ENCODE measurements at regions of chr16 and their contacts with region 1.

Region 1: DNA sequence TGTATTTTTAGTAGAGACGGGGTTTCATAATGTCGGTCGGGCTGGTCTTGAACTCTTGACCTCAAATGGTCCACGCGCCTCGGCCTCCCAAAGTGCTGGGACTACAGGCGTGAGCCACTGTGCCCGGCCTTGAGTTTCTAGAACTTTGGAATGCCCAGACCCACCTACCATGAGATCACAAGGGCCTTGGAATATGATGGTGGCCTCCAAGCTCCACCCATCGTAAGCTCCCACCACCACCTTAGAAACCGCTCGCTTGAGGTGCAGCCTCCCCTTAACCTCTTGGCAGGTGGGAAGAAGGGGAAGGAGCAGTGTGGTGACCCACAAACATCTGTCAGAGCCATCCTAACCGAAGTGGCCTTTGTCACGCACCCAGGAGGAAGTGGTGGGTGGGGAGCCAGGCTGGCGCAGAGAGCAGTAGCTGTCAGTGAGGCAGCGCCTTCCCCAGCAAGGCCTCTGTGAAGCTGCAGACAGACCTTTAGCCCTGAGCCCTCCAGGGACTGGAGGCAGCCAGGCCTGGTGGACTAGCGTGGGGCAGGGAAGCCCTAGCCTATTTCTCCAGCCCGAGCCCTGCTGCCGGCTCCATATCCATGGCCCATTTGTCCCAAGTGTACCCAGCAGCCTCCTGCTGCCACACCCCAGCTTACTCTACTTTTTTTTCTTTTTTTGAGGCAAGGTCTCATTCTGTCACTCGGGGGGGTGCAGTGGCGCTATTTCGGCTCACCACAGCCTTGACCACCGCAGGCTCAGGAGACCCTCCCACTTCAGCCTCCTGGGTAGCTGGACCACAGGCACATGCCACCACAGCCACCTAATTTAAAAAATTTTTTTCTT is 13.1 kb upstream of the SEPHS2 start:
- DNase-seq: peak; percentile 93
- H3K4me3 Mint-ChIP-seq: peak overlapping the region; percentile 68
- H3K27ac Mint-ChIP-seq: peak overlapping the region; percentile 99
- H3K4me1 Mint-ChIP-seq: peaks cover 79% of the 10 kb centered on the region
- H3K27me3 Mint-ChIP-seq: no peaks in the 10 kb centered on the region

Region 2: GRCh38 chr16:30447512-30448226 is 11.1 kb before region 1 on chr16:
- CTCF ChIA-PET with region 1: interaction called, 35 read pairs
- POLR2A ChIA-PET with region 1: no interaction called
- DNase-seq: no peak
- H3K4me3 Mint-ChIP-seq: no peak overlapping the region
- H3K27ac Mint-ChIP-seq: peak overlapping the region; percentile 68
- H3K4me1 Mint-ChIP-seq: peaks cover 72% of the 10 kb centered on the region
- H3K27me3 Mint-ChIP-seq: no peaks in the 10 kb centered on the region